Uterus (tissue), 4 donors: ENCODE measurements at regions of chr19 and their contacts with region 1.

Region 1: GRCh38 chr19:47713046-47714021 is at the start of gene EHD2:
- DNase-seq: peak; percentile 81 to 87
- H3K4me3 ChIP-seq: peak within 1 kb of the TSS; percentile 87 to 97
- H3K27ac ChIP-seq: peak within 1 kb of the TSS; percentile 98 to 99
- H3K4me1 ChIP-seq: peaks cover 0 to 21% of the 10 kb centered on the region in 2 donors
- H3K27me3 ChIP-seq: no peaks in the 10 kb centered on the region
- CTCF ChIP-seq: peak; percentile 96 to 100 (median 99)
- POLR2A ChIP-seq: peak; percentile 75 to 85
- total RNA-seq, gene EHD2: 72.0 to 198 (median 82.9) TPM

Region 2: GRCh38 chr19:47742634-47743033 is 29.3 kb after region 1 on chr19:
- intact Hi-C with region 1: loop called (anchors 2 kb)
- DNase-seq: peak in 1 of 2 donors; percentile 46
- H3K4me3 ChIP-seq: peak overlapping the region in 1 of 2 donors; percentile 24
- H3K27ac ChIP-seq: peak overlapping the region; percentile 98 to 99
- H3K4me1 ChIP-seq: peaks cover 4 to 17% of the 10 kb centered on the region in 2 donors
- H3K27me3 ChIP-seq: no peaks in the 10 kb centered on the region
- CTCF ChIP-seq: no peak
- POLR2A ChIP-seq: no peak

Region 3: DNA sequence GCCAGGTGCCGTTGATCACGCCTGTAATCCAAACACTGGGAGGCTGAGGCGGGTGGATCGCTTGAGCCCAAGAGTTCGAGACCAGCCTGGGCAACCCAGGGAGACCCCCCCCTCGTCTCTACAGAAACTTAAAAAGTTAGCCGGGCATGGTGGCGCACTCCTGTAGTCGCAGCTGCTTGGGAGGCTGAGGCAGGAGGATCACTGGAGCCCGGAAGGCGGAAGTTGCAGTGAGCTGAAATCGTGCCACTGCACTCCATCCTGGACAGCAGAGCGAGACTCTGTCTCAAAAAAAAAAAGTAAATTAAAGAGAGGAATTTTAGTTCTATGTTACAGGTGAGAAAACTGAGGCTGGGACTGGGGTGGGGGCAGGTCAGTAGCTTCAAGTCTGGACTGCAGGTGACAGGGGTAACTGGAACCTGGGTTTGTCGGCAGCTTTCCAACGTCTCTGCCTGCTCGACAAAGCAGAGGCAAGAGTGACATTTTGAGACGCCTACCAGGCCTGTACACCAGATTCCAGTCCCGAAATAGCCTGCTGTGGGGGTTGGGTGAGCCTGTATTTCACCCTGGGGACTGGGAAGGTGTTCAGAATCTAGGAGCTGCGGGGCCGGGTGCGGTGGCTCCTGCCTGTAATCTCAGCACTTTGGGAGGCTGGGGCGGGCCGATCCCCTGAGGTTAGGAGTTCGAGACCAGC is 66.3 kb after region 1 on chr19:
- intact Hi-C with region 1: loop called (anchors 10 kb)
- DNase-seq: peak; percentile 68 to 73
- H3K4me3 ChIP-seq: peak overlapping the region; percentile 79 to 92
- H3K27ac ChIP-seq: peak overlapping the region; percentile 97 to 99
- H3K4me1 ChIP-seq: peaks cover 0 to 10% of the 10 kb centered on the region in 2 donors
- H3K27me3 ChIP-seq: no peaks in the 10 kb centered on the region
- CTCF ChIP-seq: no peak
- POLR2A ChIP-seq: peak in 1 of 2 donors; percentile 31